ENCODE measurements at regions of chr22 and their contacts with region 1.

Region 1: GRCh38 chr22:35987487-35987886 is 41.1 kb downstream of the RBFOX2 start:
- DNase-seq: no peak
- H3K4me3 ChIP-seq: no peak overlapping the region
- CTCF ChIP-seq: no peak

Region 2: GRCh38 chr22:35840302-35840739 is 147.2 kb before region 1 on chr22:
- CTCF ChIA-PET with region 1: no interaction called
- POLR2A ChIA-PET with region 1: no interaction called
- DNase-seq: peak; percentile 97
- H3K4me3 ChIP-seq: peak overlapping the region; percentile 73
- CTCF ChIP-seq: no peak

Region 3: DNA sequence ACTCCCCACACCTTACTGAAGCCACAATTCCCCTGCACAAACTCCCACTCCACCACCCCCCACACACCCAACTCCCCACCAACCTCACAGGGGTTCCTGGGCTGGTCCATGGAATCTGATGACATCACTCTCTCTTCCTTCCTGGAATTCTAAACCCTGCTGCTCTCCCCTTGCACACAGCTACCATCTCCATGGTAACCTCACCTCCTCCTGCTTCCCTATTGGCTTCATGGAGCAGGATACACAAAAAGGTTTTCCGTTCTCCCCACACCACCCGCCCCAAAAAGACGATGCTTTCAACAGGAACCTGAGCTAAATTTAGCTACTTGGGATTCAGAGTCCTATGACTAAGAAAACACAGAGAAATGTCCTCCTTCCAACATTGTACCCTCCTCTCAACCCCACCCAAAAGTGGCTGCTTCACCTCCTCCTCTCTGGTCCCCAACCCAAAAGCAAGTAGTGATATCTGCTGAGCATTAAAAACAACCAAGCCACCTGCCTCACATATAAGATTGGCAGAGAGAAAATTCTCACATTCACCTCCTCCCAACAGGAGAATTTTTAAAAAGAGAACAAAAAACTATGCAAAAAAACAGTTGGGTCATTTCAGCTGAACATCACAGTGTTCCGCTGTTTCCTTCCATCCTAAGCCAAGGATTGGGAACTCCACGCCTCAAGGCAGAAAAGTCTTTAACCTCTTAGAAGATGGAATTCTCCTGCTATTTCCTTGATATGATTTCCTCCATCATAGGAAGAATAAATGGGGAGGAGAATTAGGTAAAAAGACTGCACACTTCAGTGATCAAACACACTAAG is 25.8 kb before region 1 on chr22:
- CTCF ChIA-PET with region 1: interaction called, 12 read pairs
- POLR2A ChIA-PET with region 1: no interaction called
- DNase-seq: peak; percentile 70
- H3K4me3 ChIP-seq: peak overlapping the region; percentile 27
- CTCF ChIP-seq: no peak